HCT116 (cell line): ENCODE measurements at regions of chr5 and their contacts with region 1.

Region 1: DNA sequence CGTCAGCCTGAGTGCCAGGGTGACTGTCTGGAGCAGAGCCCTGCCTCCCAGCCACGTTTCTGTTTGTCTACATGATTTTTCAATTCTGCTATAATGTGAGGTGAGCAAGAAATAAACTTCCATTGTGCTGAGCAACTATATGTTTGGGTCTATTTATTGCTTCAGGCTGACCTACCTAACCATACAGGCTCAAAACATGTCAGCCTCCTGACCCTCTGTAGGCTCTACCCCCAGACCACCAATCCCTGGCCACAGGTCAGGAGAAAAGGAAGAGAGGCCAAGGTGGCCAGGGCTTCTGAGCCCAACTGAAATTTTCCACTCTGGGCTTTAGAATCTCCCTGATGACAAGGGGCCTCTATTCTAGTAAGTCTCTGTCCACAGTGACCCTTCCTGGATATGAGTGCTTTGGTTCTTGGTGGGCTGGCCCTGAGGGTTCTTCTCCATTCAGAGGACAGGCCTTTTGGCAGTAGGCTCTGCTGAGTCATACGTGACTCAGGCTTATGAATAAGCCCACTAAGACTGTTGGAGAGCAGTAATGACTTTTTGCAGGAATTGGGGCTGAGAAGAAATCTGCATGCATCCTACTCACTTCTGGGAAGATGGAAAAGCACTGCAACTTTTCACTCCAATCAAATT is 117.2 kb upstream of the TBCA start:
- DNase-seq: peak; percentile 79
- ATAC-seq: peak; percentile 95
- H3K4me3 ChIP-seq: no peak overlapping the region
- H3K27ac ChIP-seq: peak overlapping the region; percentile 39; the same call in 1 of the 2 replicates
- H3K4me1 ChIP-seq: peaks cover 9 to 26% of the 10 kb centered on the region in 2 experiments
- H3K27me3 ChIP-seq: no peaks in the 10 kb centered on the region
- CTCF ChIP-seq: no peak
- POLR2A ChIP-seq: no peak
- RAD21 ChIP-seq: no peak

Region 2: DNA sequence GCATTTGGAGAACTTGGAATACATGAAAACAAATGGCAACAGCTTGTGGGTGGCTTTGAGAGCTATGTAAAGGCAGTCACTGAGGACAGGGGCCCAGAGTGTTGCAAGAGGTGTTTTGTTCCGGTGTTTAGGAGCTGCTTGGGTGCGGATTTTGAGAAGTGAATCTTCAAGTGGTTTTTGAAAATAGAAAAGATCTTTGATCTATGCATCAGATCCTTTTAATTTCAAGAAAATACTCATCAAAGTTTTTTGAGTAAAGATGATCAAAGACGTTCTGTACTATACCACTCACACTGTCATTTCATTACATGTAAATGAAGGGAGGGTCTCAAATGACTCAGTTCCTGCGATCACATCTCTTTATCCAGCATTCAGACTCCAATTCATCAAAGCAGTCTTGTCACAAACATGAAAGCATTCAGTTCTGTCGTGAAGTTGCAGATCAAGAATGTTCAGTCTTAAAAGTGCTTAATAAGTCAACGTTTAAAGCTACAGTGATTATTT is 513.7 kb before region 1 on chr5:
- CTCF ChIA-PET with region 1: no interaction called
- POLR2A ChIA-PET with region 1: no interaction called
- RAD21 ChIA-PET with region 1: no interaction called
- intact Hi-C with region 1: no loop called
- DNase-seq: no peak
- ATAC-seq: no peak
- H3K4me3 ChIP-seq: no peak overlapping the region
- H3K27ac ChIP-seq: no peak overlapping the region
- H3K4me1 ChIP-seq: no peaks in the 10 kb centered on the region
- H3K27me3 ChIP-seq: no peaks in the 10 kb centered on the region
- CTCF ChIP-seq: no peak
- POLR2A ChIP-seq: no peak
- RAD21 ChIP-seq: no peak

Region 3: GRCh38 chr5:77693892-77694291 is 199.5 kb before region 1 on chr5:
- CTCF ChIA-PET with region 1: no interaction called
- POLR2A ChIA-PET with region 1: no interaction called
- RAD21 ChIA-PET with region 1: no interaction called
- intact Hi-C with region 1: no loop called
- DNase-seq: no peak
- ATAC-seq: no peak
- H3K4me3 ChIP-seq: no peak overlapping the region
- H3K27ac ChIP-seq: no peak overlapping the region
- H3K4me1 ChIP-seq: no peaks in the 10 kb centered on the region; a peak in 1 of 4 replicates
- H3K27me3 ChIP-seq: no peaks in the 10 kb centered on the region
- CTCF ChIP-seq: no peak
- POLR2A ChIP-seq: no peak
- RAD21 ChIP-seq: no peak

Region 4: GRCh38 chr5:77924081-77924480 is 30.7 kb after region 1 on chr5:
- CTCF ChIA-PET with region 1: no interaction called
- POLR2A ChIA-PET with region 1: no interaction called
- RAD21 ChIA-PET with region 1: no interaction called
- intact Hi-C with region 1: no loop called
- DNase-seq: no peak
- ATAC-seq: no peak
- H3K4me3 ChIP-seq: no peak overlapping the region
- H3K27ac ChIP-seq: no peak overlapping the region
- H3K4me1 ChIP-seq: no peaks in the 10 kb centered on the region
- H3K27me3 ChIP-seq: no peaks in the 10 kb centered on the region
- CTCF ChIP-seq: no peak
- POLR2A ChIP-seq: no peak
- RAD21 ChIP-seq: no peak

Region 5: DNA sequence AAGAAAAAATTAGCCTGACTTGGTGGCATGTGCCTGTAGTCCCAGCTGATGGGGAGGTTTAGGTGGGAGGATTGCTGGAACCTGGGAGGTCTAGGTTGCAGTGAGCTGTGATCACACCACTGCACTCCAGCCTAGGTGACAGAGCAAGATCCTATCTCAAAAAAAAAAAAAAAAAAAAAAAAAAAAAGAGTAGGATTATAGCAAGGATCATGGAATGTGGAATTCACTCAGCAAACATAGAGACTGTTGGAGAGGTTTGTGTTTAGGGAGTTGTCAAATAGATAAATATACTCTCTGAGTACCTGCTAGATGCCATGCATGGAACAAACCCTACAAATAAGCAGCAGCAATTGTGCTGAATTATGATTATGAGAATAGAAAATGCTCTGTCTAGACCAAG is 87.3 kb after region 1 on chr5:
- CTCF ChIA-PET with region 1: no interaction called
- POLR2A ChIA-PET with region 1: no interaction called
- RAD21 ChIA-PET with region 1: interaction called in 1 of 2 experiments, 10 read pairs
- intact Hi-C with region 1: no loop called
- DNase-seq: no peak
- ATAC-seq: no peak
- H3K4me3 ChIP-seq: no peak overlapping the region
- H3K27ac ChIP-seq: no peak overlapping the region
- H3K4me1 ChIP-seq: no peaks in the 10 kb centered on the region
- H3K27me3 ChIP-seq: no peaks in the 10 kb centered on the region
- CTCF ChIP-seq: no peak
- POLR2A ChIP-seq: no peak
- RAD21 ChIP-seq: no peak

Region 6: DNA sequence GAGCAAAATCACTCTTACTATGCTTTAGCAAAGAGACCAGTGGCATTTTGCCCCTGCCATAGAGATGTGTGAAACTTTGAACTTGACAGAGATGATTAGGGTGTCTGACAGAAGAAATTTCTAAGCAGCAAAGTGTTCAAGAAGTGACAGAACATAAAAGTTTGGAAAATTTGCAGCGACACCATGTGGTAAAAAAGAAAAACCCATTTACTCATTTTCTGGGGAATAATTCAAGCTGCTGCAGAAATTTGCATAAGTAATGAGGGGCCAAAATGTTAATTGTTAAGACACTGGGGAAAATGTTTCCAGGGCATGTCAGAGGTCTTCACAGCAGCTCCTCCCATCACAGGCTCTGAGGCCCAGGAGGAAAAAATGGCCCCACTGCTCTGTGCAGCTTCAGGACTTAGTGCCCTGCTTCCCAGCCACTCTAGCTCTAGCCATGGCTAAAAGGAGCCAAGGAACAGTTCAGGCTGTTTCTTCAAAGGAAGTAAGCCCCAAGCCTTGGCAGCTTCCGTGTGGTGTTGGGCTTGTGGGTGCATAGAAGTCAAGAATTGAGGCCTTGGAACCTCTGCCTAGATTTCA is 407.2 kb after region 1 on chr5:
- CTCF ChIA-PET with region 1: no interaction called
- POLR2A ChIA-PET with region 1: no interaction called
- RAD21 ChIA-PET with region 1: no interaction called
- intact Hi-C with region 1: no loop called
- DNase-seq: peak; percentile 23
- ATAC-seq: no peak
- H3K4me3 ChIP-seq: no peak overlapping the region
- H3K27ac ChIP-seq: no peak overlapping the region
- H3K4me1 ChIP-seq: peaks cover 0 to 3% of the 10 kb centered on the region in 2 experiments; a peak in 1 of 4 replicates
- H3K27me3 ChIP-seq: no peaks in the 10 kb centered on the region
- CTCF ChIP-seq: peak; percentile 36 to 65 (median 41); a peak in 4 of 6 replicates
- POLR2A ChIP-seq: no peak
- RAD21 ChIP-seq: peak; percentile 56